ENCODE measurements at regions of chr18 and their contacts with region 1.

Region 1: GRCh38 chr18:35189510-35189909 is 51.3 kb upstream of the ZNF397 start:
- DNase-seq: no peak
- ATAC-seq: no peak
- H3K4me3 ChIP-seq: no peak overlapping the region
- H3K27ac ChIP-seq: no peak overlapping the region
- H3K4me1 ChIP-seq: no peaks in the 10 kb centered on the region
- H3K27me3 ChIP-seq: no peaks in the 10 kb centered on the region
- CTCF ChIP-seq: no peak

Region 2: DNA sequence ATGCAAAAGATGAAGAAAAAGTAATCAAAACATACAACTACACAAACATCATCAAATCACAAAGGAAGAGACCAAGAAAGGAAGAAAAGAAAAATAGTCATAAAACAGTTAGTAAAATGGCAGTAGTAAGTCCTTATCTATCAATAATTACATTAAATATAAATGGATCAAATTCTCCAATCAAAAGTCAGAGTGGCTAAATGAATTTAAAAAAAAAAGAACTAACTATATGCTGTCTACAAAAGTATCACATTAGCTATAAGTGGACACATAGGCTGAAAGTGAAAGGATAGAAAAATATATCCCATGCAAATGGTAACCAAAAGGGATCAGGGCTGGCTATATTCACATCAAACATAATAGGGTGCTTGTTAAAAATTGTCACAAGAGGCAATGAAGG is 1081.3 kb before region 1 on chr18:
- intact Hi-C with region 1: no loop called
- DNase-seq: no peak
- ATAC-seq: no peak
- H3K4me3 ChIP-seq: no peak overlapping the region
- H3K27ac ChIP-seq: no peak overlapping the region
- H3K4me1 ChIP-seq: no peaks in the 10 kb centered on the region
- H3K27me3 ChIP-seq: no peaks in the 10 kb centered on the region
- CTCF ChIP-seq: no peak

Region 3: DNA sequence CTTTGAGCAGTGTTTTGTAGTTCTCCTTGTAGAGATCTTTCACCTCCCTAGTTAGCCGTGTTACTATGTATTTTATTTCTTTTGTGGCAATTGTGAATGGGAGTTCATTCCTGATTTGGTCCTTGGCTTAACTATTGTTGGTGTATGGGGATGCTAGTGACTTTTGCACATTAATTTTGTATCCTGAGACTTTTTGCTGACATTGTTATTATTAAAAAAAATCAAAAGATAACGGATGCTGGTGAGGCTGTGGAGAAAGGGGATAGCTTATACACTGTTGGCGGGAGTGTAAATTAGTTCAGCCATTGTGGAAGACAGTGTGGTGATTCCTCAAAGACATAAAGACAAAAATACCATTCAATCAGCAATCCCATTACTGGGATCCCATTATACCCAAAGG is 34.3 kb after region 1 on chr18:
- intact Hi-C with region 1: loop called in 1 of 10 experiments (anchors 2 kb)
- DNase-seq: no peak
- ATAC-seq: no peak
- H3K4me3 ChIP-seq: no peak overlapping the region
- H3K27ac ChIP-seq: no peak overlapping the region
- H3K4me1 ChIP-seq: no peaks in the 10 kb centered on the region
- H3K27me3 ChIP-seq: no peaks in the 10 kb centered on the region
- CTCF ChIP-seq: no peak

Region 4: GRCh38 chr18:35240664-35241447 is 51.3 kb after region 1 on chr18 and contains the start of gene ZNF397:
- intact Hi-C with region 1: no loop called
- DNase-seq: peak; percentile 98 to 99
- ATAC-seq: peak; percentile 100
- H3K4me3 ChIP-seq: peak within 1 kb of the TSS; percentile 54 to 92 (median 74)
- H3K27ac ChIP-seq: peak within 1 kb of the TSS; percentile 93 to 99 (median 98)
- H3K4me1 ChIP-seq: peaks cover 0 to 21% (median 13%) of the 10 kb centered on the region in 9 donors
- H3K27me3 ChIP-seq: no peaks in the 10 kb centered on the region
- CTCF ChIP-seq: peak in 2 of 9 donors; percentile 4 to 19
- total RNA-seq, gene ZNF397: 12.7 to 18.6 (median 14.6) TPM